Caco-2 (cell line): ENCODE measurements at regions of chr7 and their contacts with region 1.

Region 1: DNA sequence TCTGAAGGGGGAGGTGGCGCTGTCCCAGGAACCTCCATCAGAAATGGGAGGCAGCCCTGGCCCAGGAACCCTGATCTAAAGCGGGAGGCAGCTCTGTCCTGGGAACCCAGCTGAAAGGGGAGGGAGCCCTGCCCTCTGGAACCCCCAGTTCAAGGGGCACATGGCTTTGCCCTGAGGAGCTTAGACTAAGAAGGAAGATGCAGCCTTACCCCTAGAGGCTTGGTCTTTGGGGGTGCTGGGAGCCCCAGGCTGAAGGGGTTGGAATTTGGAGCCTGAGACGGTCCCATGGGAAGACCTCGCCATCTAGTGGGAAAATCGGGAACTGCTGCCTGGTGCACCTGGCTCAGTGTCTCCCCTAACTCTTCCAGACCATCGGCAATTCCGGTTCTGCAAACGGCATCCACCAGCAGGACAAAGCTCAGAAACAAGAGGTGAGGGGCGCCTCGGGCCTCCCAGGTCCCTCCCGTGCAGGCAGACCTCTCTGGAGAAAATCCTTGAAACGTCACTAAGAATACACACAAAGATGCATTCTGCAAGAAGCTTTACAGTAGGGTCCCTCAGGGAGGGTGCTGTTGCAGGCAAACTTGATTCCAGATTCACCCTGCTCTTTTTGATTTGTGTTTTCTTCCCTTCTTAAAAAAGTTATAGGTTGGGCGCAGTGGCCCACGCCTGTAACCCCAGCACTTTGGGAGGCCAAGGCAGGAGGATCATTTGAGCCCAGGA is 52.4 kb upstream of the GTF2IRD1 start:
- DNase-seq: peak; percentile 76 to 83
- H3K4me3 ChIP-seq: no peak overlapping the region
- H3K4me3 Mint-ChIP-seq: no peak overlapping the region
- H3K27ac Mint-ChIP-seq: no peak overlapping the region
- H3K4me1 ChIP-seq: no peaks in the 10 kb centered on the region
- H3K4me1 Mint-ChIP-seq: no peaks in the 10 kb centered on the region
- H3K27me3 ChIP-seq: no peaks in the 10 kb centered on the region
- H3K27me3 Mint-ChIP-seq: no peaks in the 10 kb centered on the region
- CTCF ChIP-seq: peak; percentile 97

Region 2: GRCh38 chr7:74068393-74069085 is 332.8 kb before region 1 on chr7:
- CTCF ChIA-PET with region 1: interaction called, 3 read pairs
- POLR2A ChIA-PET with region 1: no interaction called
- intact Hi-C with region 1: loop called (anchors 2 kb)
- DNase-seq: no peak
- H3K4me3 ChIP-seq: no peak overlapping the region
- H3K4me3 Mint-ChIP-seq: no peak overlapping the region
- H3K27ac Mint-ChIP-seq: no peak overlapping the region
- H3K4me1 ChIP-seq: no peaks in the 10 kb centered on the region
- H3K4me1 Mint-ChIP-seq: no peaks in the 10 kb centered on the region
- H3K27me3 ChIP-seq: no peaks in the 10 kb centered on the region
- H3K27me3 Mint-ChIP-seq: no peaks in the 10 kb centered on the region
- CTCF ChIP-seq: no peak

Region 3: DNA sequence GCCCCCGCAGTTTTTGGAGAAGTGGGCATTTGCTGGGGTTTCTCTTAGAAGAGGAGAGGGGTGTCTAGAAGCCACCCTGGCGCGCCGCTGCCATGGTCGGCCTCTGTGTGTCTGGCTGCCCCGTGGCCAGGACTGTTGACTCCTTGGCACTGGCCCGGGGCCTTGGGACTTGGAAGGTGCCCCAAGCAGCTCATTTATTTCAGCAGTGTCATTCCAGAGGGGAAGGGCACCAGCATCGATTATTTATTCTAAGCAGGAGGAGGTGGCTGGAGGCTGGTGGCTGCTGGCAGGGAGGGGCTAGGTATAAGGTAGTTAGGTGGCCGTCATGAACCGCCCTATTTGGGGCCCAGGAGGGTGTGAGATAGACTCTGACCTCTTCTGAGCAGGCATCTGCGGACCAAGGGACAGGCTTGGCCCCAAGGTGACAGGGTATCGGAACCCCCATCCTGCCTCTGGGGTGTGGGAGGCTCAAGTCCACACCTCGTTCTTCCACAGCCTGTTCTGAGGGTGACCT is 54.0 kb after region 1 on chr7:
- CTCF ChIA-PET with region 1: no interaction called
- POLR2A ChIA-PET with region 1: no interaction called
- intact Hi-C with region 1: no loop called
- DNase-seq: peak; percentile 37 to 80
- H3K4me3 ChIP-seq: peak overlapping the region; percentile 81
- H3K4me3 Mint-ChIP-seq: peak overlapping the region; percentile 73
- H3K27ac Mint-ChIP-seq: peak overlapping the region; percentile 65
- H3K4me1 ChIP-seq: peaks cover 29% of the 10 kb centered on the region
- H3K4me1 Mint-ChIP-seq: peaks cover 27% of the 10 kb centered on the region
- H3K27me3 ChIP-seq: no peaks in the 10 kb centered on the region
- H3K27me3 Mint-ChIP-seq: no peaks in the 10 kb centered on the region
- CTCF ChIP-seq: no peak